Right ventricle myocardium inferior (tissue), 1 donor: ENCODE measurements at regions of chr5 and their contacts with region 1.

Region 1: GRCh38 chr5:54455413-54456157 is at the start of gene HSPB3:
- DNase-seq: peak; percentile 80
- ATAC-seq: peak; percentile 83
- total RNA-seq, gene HSPB3: 549 TPM

Region 2: DNA sequence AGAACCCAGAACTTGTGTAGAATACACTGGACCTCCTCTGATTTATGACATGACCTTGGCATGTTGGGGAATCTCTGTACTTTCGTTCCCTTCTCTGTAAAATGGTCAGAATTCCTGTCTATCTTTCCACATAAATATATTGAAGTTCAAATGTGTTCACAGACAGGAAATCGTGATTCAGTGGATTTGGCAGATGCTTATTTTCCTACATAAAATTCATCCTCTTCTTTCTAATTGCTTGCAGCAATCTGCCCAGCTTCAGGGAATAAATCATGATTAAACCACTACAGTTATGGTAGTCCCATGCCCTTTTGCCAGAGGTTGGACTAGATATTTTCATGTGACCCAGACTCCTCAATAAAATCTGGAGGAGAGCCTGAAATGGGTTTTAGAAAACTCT is 93.2 kb before region 1 on chr5:
- intact Hi-C with region 1: no loop called
- DNase-seq: no peak
- ATAC-seq: no peak

Region 3: DNA sequence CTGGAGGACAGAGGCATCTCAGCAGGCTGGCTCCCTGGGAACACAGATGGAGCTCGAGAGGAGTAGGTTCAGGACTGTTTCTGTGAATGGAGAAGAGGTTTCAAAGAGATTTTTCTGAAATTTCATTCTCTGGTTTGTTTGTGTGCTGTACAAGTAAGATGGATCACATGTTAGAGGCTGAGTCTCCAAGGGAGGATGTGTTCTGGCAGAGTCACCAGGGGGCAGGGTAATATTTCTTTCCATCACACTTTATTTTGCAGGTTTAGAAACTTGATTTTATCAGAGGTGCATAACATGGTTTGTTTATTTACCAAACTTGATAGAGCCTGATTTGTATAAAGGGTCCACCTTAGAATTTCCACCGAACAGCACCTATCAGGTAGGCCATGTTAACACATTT is 76.0 kb before region 1 on chr5:
- intact Hi-C with region 1: no loop called
- DNase-seq: no peak
- ATAC-seq: no peak

Region 4: GRCh38 chr5:54492178-54492577 is 36.6 kb after region 1 on chr5:
- intact Hi-C with region 1: loop called (anchors 1 kb)
- DNase-seq: no peak
- ATAC-seq: peak; percentile 18

Region 5: GRCh38 chr5:54663866-54664265 is 208.3 kb after region 1 on chr5:
- intact Hi-C with region 1: no loop called
- DNase-seq: no peak
- ATAC-seq: peak; percentile 61